Activated CD4-positive, alpha-beta T cell treated with anti-CD3 and anti-CD28 coated beads, Interleukin-2, amount 10 ng/mL, durations not matched to agents 7 days and 5 days (primary cell): ENCODE measurements at regions of chr15 and their contacts with region 1.

Region 1: GRCh38 chr15:50116473-50116872 is 2.6 kb downstream of the ATP8B4 start:
- DNase-seq: no peak
- H3K4me3 Mint-ChIP-seq: no peak overlapping the region
- H3K27ac Mint-ChIP-seq: no peak overlapping the region
- H3K4me1 Mint-ChIP-seq: peaks cover 50% of the 10 kb centered on the region
- H3K27me3 Mint-ChIP-seq: no peaks in the 10 kb centered on the region

Region 2: GRCh38 chr15:50134520-50135024 is 18.1 kb after region 1 on chr15:
- CTCF ChIA-PET with region 1: interaction called, 12 read pairs
- POLR2A ChIA-PET with region 1: no interaction called
- DNase-seq: no peak
- H3K4me3 Mint-ChIP-seq: no peak overlapping the region
- H3K27ac Mint-ChIP-seq: peak overlapping the region; percentile 79
- H3K4me1 Mint-ChIP-seq: peaks cover 40% of the 10 kb centered on the region
- H3K27me3 Mint-ChIP-seq: no peaks in the 10 kb centered on the region